ENCODE measurements at regions of chr1 and their contacts with region 1.

Region 1: DNA sequence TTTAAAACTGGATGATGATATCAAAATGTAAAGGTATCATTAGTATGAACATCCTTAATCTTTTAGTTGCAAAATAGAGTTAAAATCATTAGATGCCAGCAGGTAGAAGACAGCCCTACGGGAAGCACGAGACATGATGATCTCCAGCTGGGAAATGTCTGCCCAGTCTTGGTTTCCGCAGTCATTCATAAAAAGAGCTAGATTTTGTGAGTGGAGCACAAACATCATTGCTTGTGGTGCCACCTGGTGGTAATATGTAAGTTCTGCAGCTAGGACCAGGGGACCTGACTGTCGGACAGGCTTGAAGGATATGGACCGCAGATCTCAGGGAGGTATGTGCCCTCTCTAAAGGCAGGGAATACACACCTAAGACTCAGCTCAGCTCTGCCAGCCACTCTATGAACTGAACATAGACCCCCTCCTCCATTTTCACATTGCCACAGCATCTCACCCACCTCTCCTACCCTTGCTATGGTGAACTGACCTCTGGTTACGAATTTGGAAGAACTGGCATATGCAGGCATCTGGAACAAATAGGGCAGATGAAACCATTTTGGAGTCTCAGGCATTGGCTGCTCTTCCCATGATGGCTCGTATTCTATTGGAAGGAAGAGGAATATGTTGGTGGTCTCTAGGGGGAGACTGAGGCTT is 9.2 kb downstream of the FCMR start:
- DNase-seq: peak; percentile 54
- H3K4me3 Mint-ChIP-seq: no peak overlapping the region
- H3K27ac Mint-ChIP-seq: no peak overlapping the region
- H3K4me1 Mint-ChIP-seq: peaks cover 46% of the 10 kb centered on the region
- H3K27me3 Mint-ChIP-seq: peaks cover 11% of the 10 kb centered on the region

Region 2: DNA sequence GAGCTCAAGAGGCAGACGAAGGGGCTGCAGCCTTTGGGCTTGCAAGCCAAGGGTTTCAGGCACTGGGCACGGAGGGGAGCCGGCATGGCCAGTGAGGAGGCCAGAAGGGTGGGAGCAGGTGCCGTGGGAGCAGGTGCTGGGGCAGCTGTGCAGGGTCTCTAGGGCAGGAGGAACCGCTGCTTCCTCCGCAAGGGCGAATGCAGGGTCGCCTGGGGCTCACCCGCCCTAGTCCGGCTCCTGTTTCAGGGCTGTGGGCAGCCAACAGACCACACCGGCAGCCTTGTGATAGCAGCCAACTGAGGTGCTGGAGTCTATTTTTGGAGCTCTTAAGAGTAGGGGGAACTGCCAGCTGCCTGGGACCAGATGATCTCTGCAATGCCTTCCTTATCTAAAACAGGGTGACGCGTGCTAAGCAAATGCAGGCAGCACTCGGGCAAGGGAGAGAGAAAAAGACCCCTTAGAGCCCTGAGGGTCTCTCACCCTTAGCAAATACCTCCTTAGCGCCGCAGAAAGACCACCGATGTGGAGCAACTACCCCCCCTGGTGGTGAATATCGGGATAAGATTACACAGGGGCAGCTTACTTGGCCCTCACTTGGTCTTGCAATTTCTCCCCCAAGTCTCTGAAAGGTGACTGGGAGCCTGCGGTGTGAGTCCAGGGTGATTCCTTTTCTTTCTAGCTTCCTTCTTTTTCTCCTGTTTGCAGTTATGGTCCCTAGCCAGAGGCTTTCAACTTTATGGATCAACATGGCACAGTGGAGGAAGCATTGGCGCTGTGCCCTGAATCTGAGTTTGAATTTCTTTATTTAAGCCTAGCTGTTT is 248.5 kb before region 1 on chr1:
- intact Hi-C with region 1: loop called (anchors 5 kb)
- DNase-seq: peak; percentile 54
- H3K4me3 Mint-ChIP-seq: no peak overlapping the region
- H3K27ac Mint-ChIP-seq: no peak overlapping the region
- H3K4me1 Mint-ChIP-seq: peaks cover 28% of the 10 kb centered on the region
- H3K27me3 Mint-ChIP-seq: peaks cover 16% of the 10 kb centered on the region

Region 3: DNA sequence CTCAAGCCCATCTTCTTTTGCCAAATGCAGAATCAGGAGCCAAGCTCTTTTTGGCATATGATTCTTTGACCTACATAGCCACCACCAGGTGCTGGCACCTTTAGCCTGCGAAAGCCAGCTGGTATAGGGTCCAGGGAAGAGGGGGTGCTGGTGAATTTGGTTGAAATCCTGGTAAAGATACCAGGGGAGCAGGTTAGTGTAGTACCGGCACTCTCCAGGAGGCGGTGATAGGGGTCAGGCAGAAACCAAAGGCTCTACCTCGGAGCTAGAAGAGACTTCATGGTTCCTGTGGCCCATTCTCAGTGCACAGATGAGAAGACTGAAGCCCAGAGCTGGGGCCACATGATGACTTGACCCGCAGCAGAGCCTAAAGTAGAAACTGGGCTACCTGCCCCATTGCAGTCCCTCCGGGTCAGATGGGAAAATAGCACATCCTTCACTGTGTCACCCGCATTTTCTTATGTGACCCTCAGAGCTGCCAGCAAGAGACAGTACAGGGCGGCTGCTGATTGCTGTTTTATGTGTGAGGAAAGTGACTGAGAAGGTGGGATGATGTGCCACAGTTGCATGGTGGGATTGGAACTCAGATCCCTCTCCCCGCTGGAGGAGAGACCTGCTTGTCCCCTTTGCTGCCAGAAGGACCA is 177.9 kb before region 1 on chr1:
- intact Hi-C with region 1: loop called (anchors 1 kb)
- DNase-seq: peak; percentile 63
- H3K4me3 Mint-ChIP-seq: no peak overlapping the region
- H3K27ac Mint-ChIP-seq: peak overlapping the region; percentile 40
- H3K4me1 Mint-ChIP-seq: peaks cover 47% of the 10 kb centered on the region
- H3K27me3 Mint-ChIP-seq: no peaks in the 10 kb centered on the region

Region 4: DNA sequence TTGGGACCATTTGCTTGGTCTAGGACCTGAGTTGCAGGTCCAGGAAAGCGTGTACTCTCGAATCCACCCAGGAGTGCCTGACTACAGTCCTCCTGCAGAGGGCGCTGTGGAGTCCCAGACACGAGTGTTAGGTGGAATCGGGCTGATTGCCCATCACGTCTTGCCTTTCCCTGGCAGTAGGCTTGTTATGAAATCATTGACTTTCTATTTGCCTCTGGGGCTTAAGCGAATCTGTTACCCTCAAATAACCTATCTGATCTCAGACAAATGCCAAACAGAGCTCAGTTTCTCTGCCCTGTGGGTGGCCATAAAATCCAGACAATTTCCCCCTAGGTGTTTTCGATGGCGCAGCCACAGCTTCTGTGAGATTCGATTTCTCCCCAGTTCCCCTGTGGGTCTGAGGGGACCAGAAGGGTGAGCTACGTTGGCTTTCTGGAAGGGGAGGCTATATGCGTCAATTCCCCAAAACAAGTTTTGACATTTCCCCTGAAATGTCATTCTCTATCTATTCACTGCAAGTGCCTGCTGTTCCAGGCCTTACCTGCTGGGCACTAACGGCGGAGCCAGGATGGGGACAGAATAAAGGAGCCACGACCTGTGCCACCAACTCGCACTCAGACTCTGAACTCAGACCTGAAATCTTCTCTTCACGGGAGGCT is 47.4 kb before region 1 on chr1 and contains the start of gene IL20:
- intact Hi-C with region 1: loop called (anchors 1 kb)
- DNase-seq: peak; percentile 71
- H3K4me3 Mint-ChIP-seq: no peak within 1 kb of the TSS
- H3K27ac Mint-ChIP-seq: no peak within 1 kb of the TSS
- H3K4me1 Mint-ChIP-seq: peaks cover 8% of the 10 kb centered on the region
- H3K27me3 Mint-ChIP-seq: peaks cover 43% of the 10 kb centered on the region
- total RNA-seq, gene IL20: not detected in 2 replicates

Measured in activated T-helper 2 cell treated with anti-CD3 and anti-CD28 coated beads, Interferon-gamma antibody, Interleukin-2, Interleukin-4, amounts not matched to agents 10 μg/mL and 5 μg/mL and 100 μg/mL, durations not matched to agents 14 hours and 24 hours and 36 hours (primary cell).